Kidney (tissue), 22 donors: ENCODE measurements at regions of chr16 and their contacts with region 1.

Region 1: DNA sequence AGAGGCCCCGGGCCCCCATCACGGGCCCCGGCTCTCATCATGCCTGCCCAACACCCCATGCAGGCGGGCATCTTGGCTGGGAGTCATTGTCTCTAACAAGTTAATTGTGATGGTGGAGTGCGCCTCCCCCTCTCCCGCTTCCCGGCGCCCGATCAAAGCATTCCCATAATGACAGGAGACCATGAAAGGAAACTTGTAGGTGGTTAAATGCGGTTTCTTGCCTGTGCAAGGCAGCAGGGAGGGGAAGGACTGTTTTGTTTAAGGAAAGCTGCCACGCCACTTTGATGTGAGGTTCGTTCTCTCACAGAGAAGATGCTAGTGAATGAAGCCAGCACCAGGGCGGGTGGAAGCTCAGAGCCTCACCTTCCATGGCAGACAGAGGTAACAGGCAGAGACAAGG is 45.4 kb downstream of the C16orf78 start:
- DNase-seq: peak in 4 of 5 donors; percentile 72 to 86 (median 75)
- H3K4me3 ChIP-seq: no peak overlapping the region
- H3K27ac ChIP-seq: no peak overlapping the region
- H3K4me1 ChIP-seq: peaks cover 0 to 4% (median 0%) of the 10 kb centered on the region in 3 donors
- H3K27me3 ChIP-seq: no peaks in the 10 kb centered on the region
- CTCF ChIP-seq: no peak

Region 2: DNA sequence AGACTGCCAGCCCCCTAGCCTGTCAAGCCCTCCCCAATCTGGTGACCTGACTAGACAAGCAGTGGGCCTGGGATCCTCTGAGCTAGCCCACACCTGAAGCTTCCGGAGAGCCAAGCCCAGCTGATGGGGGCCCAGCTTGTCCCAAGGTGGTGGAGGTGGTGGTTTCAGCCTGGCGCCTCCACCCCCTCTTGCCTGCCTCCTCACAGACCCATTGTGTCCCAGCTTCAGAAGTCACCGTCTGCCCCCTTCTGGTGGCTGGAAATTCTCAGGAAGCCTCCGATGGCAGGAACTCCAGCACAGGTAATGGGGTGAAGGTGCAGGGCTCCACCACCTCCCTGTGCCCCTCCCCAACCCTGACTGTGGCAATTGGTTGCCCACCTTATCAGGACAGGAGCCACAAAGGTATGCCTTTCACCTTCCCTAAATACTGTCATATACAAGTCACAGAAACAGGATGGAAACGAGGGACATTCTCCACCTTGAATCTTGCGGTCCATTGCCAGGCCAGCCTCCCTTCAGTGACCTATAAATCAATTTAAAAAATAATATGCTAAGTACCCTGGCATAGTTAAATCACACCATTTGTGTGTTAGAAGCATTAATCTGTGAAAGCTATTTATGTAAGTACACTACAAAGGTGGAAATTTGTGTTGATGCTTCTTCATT is 502.9 kb after region 1 on chr16:
- intact Hi-C with region 1: loop called (anchors 10 kb)
- DNase-seq: peak in 4 of 5 donors; percentile 85 to 92 (median 88)
- H3K4me3 ChIP-seq: no peak overlapping the region
- H3K27ac ChIP-seq: no peak overlapping the region
- H3K4me1 ChIP-seq: no peaks in the 10 kb centered on the region
- H3K27me3 ChIP-seq: no peaks in the 10 kb centered on the region
- CTCF ChIP-seq: peak; percentile 59